ENCODE measurements at regions of chr3 and their contacts with region 1.

Region 1: GRCh38 chr3:151146071-151146730 is 56.8 kb downstream of the GPR171 start:
- DNase-seq: peak; percentile 44 to 56
- ATAC-seq: peak; percentile 82 to 96
- H3K4me3 ChIP-seq: peak overlapping the region in 1 of 4 donors; percentile 19
- H3K27ac ChIP-seq: no peak overlapping the region
- H3K4me1 ChIP-seq: peaks cover 3 to 7% of the 10 kb centered on the region in 2 donors
- H3K27me3 ChIP-seq: no peaks in the 10 kb centered on the region
- CTCF ChIP-seq: peak; percentile 70 to 86 (median 81)
- POLR2A ChIP-seq: no peak

Region 2: GRCh38 chr3:150710097-150710496 is 436.1 kb before region 1 on chr3:
- in situ Hi-C with region 1: loop called in 1 of 4 experiments (anchors 10 kb)
- intact Hi-C with region 1: no loop called
- DNase-seq: no peak
- ATAC-seq: no peak
- H3K4me3 ChIP-seq: no peak overlapping the region
- H3K27ac ChIP-seq: no peak overlapping the region
- H3K4me1 ChIP-seq: no peaks in the 10 kb centered on the region
- H3K27me3 ChIP-seq: no peaks in the 10 kb centered on the region
- CTCF ChIP-seq: no peak
- POLR2A ChIP-seq: no peak

Region 3: DNA sequence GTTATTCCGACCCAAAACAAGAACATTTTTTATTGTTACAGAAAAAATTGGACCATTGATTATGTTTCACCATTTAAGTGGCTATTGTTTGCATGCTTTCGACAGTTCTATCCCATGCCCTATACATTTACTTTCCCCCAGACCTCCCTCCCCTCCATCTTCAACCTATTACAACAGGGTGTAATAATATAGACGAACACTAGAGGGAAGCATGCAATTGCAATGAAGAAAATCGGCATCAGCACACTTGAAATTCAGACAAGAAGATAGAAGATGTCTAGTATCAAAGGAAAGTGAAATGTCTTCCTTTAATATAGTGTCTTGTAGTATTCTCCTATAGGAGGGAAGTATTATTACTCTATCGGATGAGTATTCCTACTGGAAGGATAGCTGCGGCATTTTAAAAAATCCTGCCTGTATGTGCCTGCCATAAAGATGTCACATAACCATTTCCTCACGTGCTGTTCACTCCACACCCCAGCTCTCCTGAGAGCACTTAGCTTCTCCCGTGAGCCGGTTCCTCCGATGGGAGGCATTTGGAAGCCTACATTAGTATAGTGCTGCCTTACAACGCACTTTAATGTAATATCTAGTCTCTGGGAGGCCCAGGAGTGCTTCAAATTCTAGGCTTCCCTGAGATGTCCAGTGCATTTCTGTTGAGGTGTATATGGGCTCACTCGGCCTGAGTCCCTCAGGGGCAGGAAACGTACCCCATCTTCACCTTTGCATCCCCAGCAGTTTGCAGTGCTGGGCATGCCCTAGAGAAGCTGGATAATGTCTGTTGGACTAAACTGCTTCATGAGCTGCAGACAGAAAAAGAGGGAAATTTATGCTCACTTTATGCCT is 424.7 kb before region 1 on chr3:
- in situ Hi-C with region 1: loop called (anchors 10 kb)
- intact Hi-C with region 1: loop called (anchors 1 kb)
- DNase-seq: no peak
- ATAC-seq: peak; percentile 86 to 87
- H3K4me3 ChIP-seq: no peak overlapping the region
- H3K27ac ChIP-seq: no peak overlapping the region
- H3K4me1 ChIP-seq: no peaks in the 10 kb centered on the region
- H3K27me3 ChIP-seq: no peaks in the 10 kb centered on the region
- CTCF ChIP-seq: peak; percentile 80 to 87 (median 82)
- POLR2A ChIP-seq: no peak

Region 4: DNA sequence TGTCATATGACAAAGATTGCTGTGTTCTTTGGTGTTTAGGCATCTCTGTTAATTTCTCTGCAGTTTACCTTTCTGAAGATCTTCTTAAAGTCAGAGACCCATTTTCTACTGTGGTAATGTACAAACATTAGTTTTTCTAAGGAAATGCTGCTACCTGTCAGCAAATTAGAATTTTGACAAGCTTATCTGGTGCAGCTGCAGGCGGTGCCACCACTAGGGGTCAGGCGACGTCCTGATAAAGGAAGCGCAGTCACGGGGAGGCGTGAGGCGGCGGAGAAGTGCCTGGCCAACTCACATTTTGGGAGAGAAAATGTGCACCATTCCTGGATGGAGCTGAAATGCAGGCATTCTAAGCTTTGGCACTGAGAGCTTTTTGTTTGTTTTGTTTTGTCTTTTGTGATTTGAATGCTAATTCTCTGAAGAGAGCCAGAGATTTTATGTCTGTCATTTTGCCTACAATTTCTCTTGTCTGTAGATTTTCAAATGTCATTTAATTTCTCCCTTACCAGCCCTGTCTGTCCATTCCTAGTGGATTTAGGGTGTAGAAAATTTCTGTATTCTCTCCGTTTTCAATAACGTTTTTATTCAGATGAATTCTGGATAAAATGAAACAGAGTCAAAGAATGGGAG is 358.3 kb before region 1 on chr3:
- in situ Hi-C with region 1: loop called (anchors 5 to 25 kb)
- intact Hi-C with region 1: loop called (anchors 2 kb)
- DNase-seq: peak; percentile 58 to 64
- ATAC-seq: peak; percentile 60 to 72
- H3K4me3 ChIP-seq: no peak overlapping the region
- H3K27ac ChIP-seq: no peak overlapping the region
- H3K4me1 ChIP-seq: no peaks in the 10 kb centered on the region
- H3K27me3 ChIP-seq: no peaks in the 10 kb centered on the region
- CTCF ChIP-seq: peak; percentile 72 to 89 (median 77)
- POLR2A ChIP-seq: no peak

Region 5: GRCh38 chr3:150913133-150913922 is 232.9 kb before region 1 on chr3:
- in situ Hi-C with region 1: loop called in 1 of 4 experiments (anchors 25 kb)
- intact Hi-C with region 1: no loop called
- DNase-seq: no peak
- ATAC-seq: peak; percentile 66 to 86
- H3K4me3 ChIP-seq: no peak overlapping the region
- H3K27ac ChIP-seq: peak overlapping the region in 1 of 4 donors; percentile 29
- H3K4me1 ChIP-seq: peaks cover 0 to 6% of the 10 kb centered on the region in 2 donors
- H3K27me3 ChIP-seq: no peaks in the 10 kb centered on the region
- CTCF ChIP-seq: no peak
- POLR2A ChIP-seq: no peak

Region 6: GRCh38 chr3:150925751-150926201 is 220.4 kb before region 1 on chr3:
- in situ Hi-C with region 1: loop called in 1 of 4 experiments (anchors 25 kb)
- intact Hi-C with region 1: loop called (anchors 5 kb)
- DNase-seq: no peak
- ATAC-seq: no peak
- H3K4me3 ChIP-seq: no peak overlapping the region
- H3K27ac ChIP-seq: no peak overlapping the region
- H3K4me1 ChIP-seq: no peaks in the 10 kb centered on the region
- H3K27me3 ChIP-seq: peaks cover 0 to 3% (median 0%) of the 10 kb centered on the region in 3 donors
- CTCF ChIP-seq: no peak
- POLR2A ChIP-seq: no peak

Region 7: GRCh38 chr3:151086484-151087456 is 59.4 kb before region 1 on chr3:
- in situ Hi-C with region 1: no loop called
- intact Hi-C with region 1: loop called (anchors 10 kb)
- DNase-seq: peak; percentile 18 to 34
- ATAC-seq: peak; percentile 77 to 82
- H3K4me3 ChIP-seq: peak overlapping the region; percentile 58 to 73 (median 60)
- H3K27ac ChIP-seq: peak overlapping the region in 1 of 4 donors; percentile 34
- H3K4me1 ChIP-seq: peaks cover 5 to 15% of the 10 kb centered on the region in 2 donors
- H3K27me3 ChIP-seq: peaks cover 9 to 37% (median 20%) of the 10 kb centered on the region in 3 donors
- CTCF ChIP-seq: peak in 2 of 5 experiments; percentile 11 to 30
- POLR2A ChIP-seq: no peak

Measured in gastrocnemius medialis (tissue), 4 donors.